ENCODE measurements at regions of chr18 and their contacts with region 1.

Region 1: DNA sequence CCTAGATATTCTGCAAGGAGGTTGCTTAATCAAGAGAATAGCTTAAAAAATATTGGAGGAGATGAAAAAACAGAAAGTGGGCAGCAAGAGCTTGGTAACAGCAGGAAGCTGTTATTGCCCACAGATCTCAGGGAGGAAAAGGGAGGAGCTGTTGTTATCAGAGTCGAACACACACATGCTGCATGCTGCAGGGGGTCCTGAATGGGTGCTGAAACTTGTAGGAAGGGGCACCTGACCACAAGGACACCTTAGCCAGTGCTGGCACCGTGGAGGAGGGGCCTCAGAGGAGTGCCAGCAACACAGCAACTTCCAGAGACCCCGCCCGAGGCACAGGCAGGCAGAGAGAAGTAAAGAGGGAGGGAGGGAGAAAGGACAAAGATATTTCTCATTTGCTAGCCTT is 332.9 kb downstream of the SOCS6 start:
- DNase-seq: peak in 8 of 9 experiments; percentile 22 to 77 (median 37)
- ATAC-seq: peak; percentile 86
- H3K4me3 ChIP-seq: peak overlapping the region; percentile 17 to 36
- H3K4me3 Mint-ChIP-seq: peak overlapping the region; percentile 87
- H3K27ac ChIP-seq: peak overlapping the region; percentile 63 to 67
- H3K27ac Mint-ChIP-seq: peak overlapping the region; percentile 100
- H3K4me1 ChIP-seq: peaks cover 70% of the 10 kb centered on the region
- H3K4me1 Mint-ChIP-seq: peaks cover 82% of the 10 kb centered on the region
- H3K27me3 ChIP-seq: no peaks in the 10 kb centered on the region
- H3K27me3 Mint-ChIP-seq: no peaks in the 10 kb centered on the region
- CTCF ChIP-seq: no peak

Region 2: GRCh38 chr18:70641156-70641775 is 19.6 kb after region 1 on chr18:
- CTCF ChIA-PET with region 1: no interaction called
- POLR2A ChIA-PET with region 1: interaction called, 3 read pairs
- intact Hi-C with region 1: loop called in 1 of 2 experiments (anchors 2 kb)
- DNase-seq: no peak
- ATAC-seq: no peak
- H3K4me3 ChIP-seq: no peak overlapping the region
- H3K4me3 Mint-ChIP-seq: no peak overlapping the region
- H3K27ac ChIP-seq: no peak overlapping the region
- H3K27ac Mint-ChIP-seq: peak overlapping the region; percentile 49
- H3K4me1 ChIP-seq: peaks cover 11% of the 10 kb centered on the region
- H3K4me1 Mint-ChIP-seq: peaks cover 35% of the 10 kb centered on the region
- H3K27me3 ChIP-seq: no peaks in the 10 kb centered on the region
- H3K27me3 Mint-ChIP-seq: no peaks in the 10 kb centered on the region
- CTCF ChIP-seq: no peak

Region 3: GRCh38 chr18:70659036-70659925 is 37.6 kb after region 1 on chr18:
- CTCF ChIA-PET with region 1: interaction called, 14 read pairs
- POLR2A ChIA-PET with region 1: interaction called, 9 read pairs
- intact Hi-C with region 1: loop called in 1 of 2 experiments (anchors 5 kb)
- DNase-seq: peak; percentile 29 to 87 (median 63)
- ATAC-seq: peak; percentile 92
- H3K4me3 ChIP-seq: peak overlapping the region in 1 of 2 experiments; percentile 20
- H3K4me3 Mint-ChIP-seq: peak overlapping the region; percentile 40
- H3K27ac ChIP-seq: peak overlapping the region; percentile 52 to 59
- H3K27ac Mint-ChIP-seq: peak overlapping the region; percentile 91
- H3K4me1 ChIP-seq: peaks cover 67% of the 10 kb centered on the region
- H3K4me1 Mint-ChIP-seq: peaks cover 54% of the 10 kb centered on the region
- H3K27me3 ChIP-seq: no peaks in the 10 kb centered on the region
- H3K27me3 Mint-ChIP-seq: no peaks in the 10 kb centered on the region
- CTCF ChIP-seq: no peak

Region 4: GRCh38 chr18:70931942-70932814 is 310.5 kb after region 1 on chr18:
- CTCF ChIA-PET with region 1: no interaction called
- POLR2A ChIA-PET with region 1: no interaction called
- intact Hi-C with region 1: no loop called
- DNase-seq: peak in 2 of 9 experiments; percentile 7 to 22
- ATAC-seq: peak; percentile 42
- H3K4me3 ChIP-seq: no peak overlapping the region
- H3K4me3 Mint-ChIP-seq: no peak overlapping the region
- H3K27ac ChIP-seq: no peak overlapping the region
- H3K27ac Mint-ChIP-seq: peak overlapping the region; percentile 4
- H3K4me1 ChIP-seq: peaks cover 4% of the 10 kb centered on the region
- H3K4me1 Mint-ChIP-seq: peaks cover 8% of the 10 kb centered on the region
- H3K27me3 ChIP-seq: no peaks in the 10 kb centered on the region
- H3K27me3 Mint-ChIP-seq: no peaks in the 10 kb centered on the region
- CTCF ChIP-seq: peak; percentile 42

Measured in CD8-positive, alpha-beta T cell (primary cell).